ENCODE measurements at regions of chr1 and their contacts with region 1.

Region 1: GRCh38 chr1:221435504-221435904 is 306.4 kb downstream of the DUSP10 start:
- DNase-seq: no peak
- ATAC-seq: peak in 3 of 4 donors; percentile 46 to 50 (median 47)
- H3K4me3 ChIP-seq: no peak overlapping the region
- H3K27ac ChIP-seq: no peak overlapping the region
- H3K4me1 ChIP-seq: peaks cover 13% of the 10 kb centered on the region
- H3K27me3 ChIP-seq: no peaks in the 10 kb centered on the region
- CTCF ChIP-seq: peak; percentile 98

Region 2: GRCh38 chr1:220803401-220804201 is 631.9 kb before region 1 on chr1:
- intact Hi-C with region 1: loop called in 1 of 2 experiments (anchors 10 kb)
- DNase-seq: no peak
- ATAC-seq: peak; percentile 37 to 81 (median 53)
- H3K4me3 ChIP-seq: no peak overlapping the region
- H3K27ac ChIP-seq: no peak overlapping the region
- H3K4me1 ChIP-seq: no peaks in the 10 kb centered on the region
- H3K27me3 ChIP-seq: no peaks in the 10 kb centered on the region
- CTCF ChIP-seq: peak; percentile 73

Region 3: DNA sequence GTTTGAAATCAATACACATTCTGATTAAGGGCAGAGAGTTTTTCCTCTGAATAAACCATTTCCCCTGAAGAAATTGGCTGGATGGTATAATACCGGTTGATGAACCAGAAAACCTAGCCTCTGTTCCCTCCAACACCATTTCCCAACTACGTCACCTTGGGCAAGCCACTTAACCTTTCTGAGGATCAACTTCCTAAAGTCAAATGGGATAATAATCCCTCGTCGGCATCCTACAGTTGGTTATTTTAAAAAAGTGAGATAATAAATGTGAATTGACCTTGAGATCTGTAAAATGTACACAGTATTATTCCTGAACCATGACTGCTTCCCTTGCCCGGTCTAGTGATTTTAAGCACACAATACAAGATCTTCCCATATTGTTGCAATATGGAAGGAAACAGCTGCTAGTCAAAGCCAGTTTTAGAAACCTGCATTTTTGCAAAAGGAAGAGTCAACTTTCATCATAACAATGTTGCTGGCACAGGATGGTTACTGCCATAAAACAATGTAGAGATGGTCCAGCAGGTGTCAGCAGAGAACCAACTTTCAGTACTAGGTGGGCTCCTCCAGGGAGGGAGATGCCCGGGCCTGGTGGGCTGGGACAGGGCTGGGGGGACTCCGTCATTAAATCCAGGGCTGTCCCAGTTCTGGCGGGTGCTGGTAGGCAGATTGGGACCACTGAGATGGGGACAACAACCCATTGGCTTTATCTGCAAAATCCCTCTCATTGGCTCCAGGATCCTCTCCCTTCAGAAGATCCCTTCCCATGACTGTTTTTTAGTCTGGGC is 561.4 kb before region 1 on chr1:
- intact Hi-C with region 1: loop called (anchors 2 to 5 kb)
- DNase-seq: peak in 1 of 2 donors; percentile 42
- ATAC-seq: peak in 3 of 4 donors; percentile 28 to 50 (median 46)
- H3K4me3 ChIP-seq: no peak overlapping the region
- H3K27ac ChIP-seq: no peak overlapping the region
- H3K4me1 ChIP-seq: peaks cover 11% of the 10 kb centered on the region
- H3K27me3 ChIP-seq: no peaks in the 10 kb centered on the region
- CTCF ChIP-seq: peak; percentile 65

Region 4: GRCh38 chr1:221263831-221264767 is 171.4 kb before region 1 on chr1:
- intact Hi-C with region 1: loop called (anchors 2 to 5 kb)
- DNase-seq: peak in 1 of 2 donors; percentile 20
- ATAC-seq: peak in 3 of 4 donors; percentile 65 to 69 (median 67)
- H3K4me3 ChIP-seq: no peak overlapping the region
- H3K27ac ChIP-seq: peak overlapping the region; percentile 38
- H3K4me1 ChIP-seq: no peaks in the 10 kb centered on the region
- H3K27me3 ChIP-seq: no peaks in the 10 kb centered on the region
- CTCF ChIP-seq: peak; percentile 61

Region 5: GRCh38 chr1:221478050-221478949 is 42.8 kb after region 1 on chr1:
- intact Hi-C with region 1: no loop called
- DNase-seq: peak; percentile 30 to 71
- ATAC-seq: peak; percentile 75 to 93 (median 88)
- H3K4me3 ChIP-seq: no peak overlapping the region
- H3K27ac ChIP-seq: no peak overlapping the region
- H3K4me1 ChIP-seq: no peaks in the 10 kb centered on the region
- H3K27me3 ChIP-seq: peaks cover 0 to 3% (median 0%) of the 10 kb centered on the region in 3 donors
- CTCF ChIP-seq: peak; percentile 51

Region 6: GRCh38 chr1:221488531-221488930 is 53.0 kb after region 1 on chr1:
- intact Hi-C with region 1: no loop called
- DNase-seq: no peak
- ATAC-seq: no peak
- H3K4me3 ChIP-seq: no peak overlapping the region
- H3K27ac ChIP-seq: no peak overlapping the region
- H3K4me1 ChIP-seq: no peaks in the 10 kb centered on the region
- H3K27me3 ChIP-seq: no peaks in the 10 kb centered on the region
- CTCF ChIP-seq: no peak